ENCODE measurements at regions of chr18 and their contacts with region 1.

Region 1: DNA sequence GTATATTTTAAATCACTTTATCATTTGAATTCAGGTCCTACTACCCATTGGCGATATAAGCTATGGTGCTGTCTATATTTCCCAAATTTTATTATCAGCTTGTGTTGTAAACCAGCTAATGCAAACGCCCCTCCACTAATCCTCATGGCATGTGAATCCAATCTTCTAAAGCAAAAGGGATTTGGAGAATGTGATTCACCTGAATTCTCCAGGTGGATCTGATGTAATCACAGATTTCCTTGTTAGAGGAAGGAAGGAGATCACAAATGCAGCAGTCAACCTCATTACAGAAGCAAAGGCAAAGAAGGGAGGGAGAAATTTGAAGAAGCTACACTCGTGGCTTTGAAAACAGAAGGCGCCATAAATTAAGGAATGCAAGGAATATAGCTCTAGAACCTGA is 431.1 kb upstream of the CDH19 start:
- DNase-seq: no peak

Region 2: DNA sequence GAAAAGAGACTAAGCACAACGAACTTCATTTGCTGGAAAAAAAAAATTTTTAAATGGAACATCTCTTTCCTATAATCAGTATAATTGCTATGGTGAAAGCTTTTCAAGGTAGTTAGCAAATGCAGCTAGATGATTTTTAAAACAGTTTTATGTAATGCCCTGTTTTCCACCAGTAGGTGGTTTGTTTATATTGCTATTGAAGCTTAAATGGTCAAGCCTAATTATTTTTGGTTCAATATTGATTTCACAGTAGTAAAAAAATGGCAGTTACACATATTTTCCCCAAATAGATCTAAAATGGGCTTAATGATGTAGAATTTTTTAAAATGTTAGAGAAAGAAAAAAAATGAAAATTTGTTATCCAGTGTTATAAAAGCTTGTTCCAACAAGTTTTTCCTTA is 501.3 kb before region 1 on chr18:
- intact Hi-C with region 1: loop called in 1 of 2 experiments (anchors 5 kb)
- DNase-seq: no peak

Region 3: DNA sequence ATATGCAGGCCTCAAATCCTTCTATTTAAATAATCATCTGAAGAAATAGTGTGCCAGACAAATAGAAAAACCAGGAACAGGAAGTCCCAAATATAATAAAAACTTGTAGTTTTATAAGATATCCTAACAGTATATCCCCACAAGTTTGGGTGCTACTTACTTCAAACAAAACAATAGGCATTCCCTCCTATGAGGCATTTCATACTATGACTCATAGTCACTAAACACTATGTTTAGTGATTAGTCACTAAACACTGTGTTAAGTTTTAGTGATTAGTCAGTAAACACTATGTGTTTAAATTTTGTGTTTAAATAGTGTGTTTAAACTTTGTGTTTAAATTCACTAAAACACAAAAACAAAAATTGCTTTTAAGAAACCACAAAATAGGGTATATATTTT is 24.1 kb before region 1 on chr18:
- intact Hi-C with region 1: no loop called
- DNase-seq: no peak

Measured in posterior vena cava (tissue), 2 donors.